ENCODE measurements at regions of chr15 and their contacts with region 1.

Region 1: GRCh38 chr15:83559310-83559966 is 94.5 kb upstream of the ADAMTSL3 start:
- DNase-seq: peak; percentile 57 to 75
- H3K4me3 ChIP-seq: no peak overlapping the region
- H3K4me3 Mint-ChIP-seq: no peak overlapping the region
- H3K27ac Mint-ChIP-seq: no peak overlapping the region
- H3K4me1 ChIP-seq: no peaks in the 10 kb centered on the region
- H3K4me1 Mint-ChIP-seq: no peaks in the 10 kb centered on the region
- H3K27me3 ChIP-seq: no peaks in the 10 kb centered on the region
- H3K27me3 Mint-ChIP-seq: peaks cover 3% of the 10 kb centered on the region
- CTCF ChIP-seq: peak; percentile 75 to 78

Region 2: DNA sequence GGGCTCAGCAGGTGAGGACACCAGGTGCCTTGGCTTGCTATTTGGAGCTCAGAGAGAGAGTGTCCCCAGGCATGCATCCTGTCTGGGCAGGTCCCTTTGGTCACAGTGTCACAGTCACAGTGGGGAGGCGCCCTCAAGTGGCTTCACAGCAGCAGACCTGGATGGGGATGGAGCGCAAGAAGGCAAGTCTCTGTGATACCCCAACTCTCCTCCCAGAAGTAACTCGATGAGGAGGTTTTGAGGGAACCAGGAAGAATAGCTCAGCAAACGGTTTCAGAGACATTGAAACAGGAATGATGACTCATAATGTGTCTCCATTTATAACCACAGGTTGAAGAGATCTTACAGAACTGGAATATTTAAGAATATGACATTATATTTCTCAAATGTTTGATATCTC is 178.8 kb before region 1 on chr15:
- CTCF ChIA-PET with region 1: no interaction called
- POLR2A ChIA-PET with region 1: interaction called, 5 read pairs
- intact Hi-C with region 1: loop called (anchors 5 kb)
- DNase-seq: peak; percentile 78
- H3K4me3 ChIP-seq: no peak overlapping the region
- H3K4me3 Mint-ChIP-seq: no peak overlapping the region
- H3K27ac Mint-ChIP-seq: no peak overlapping the region
- H3K4me1 ChIP-seq: no peaks in the 10 kb centered on the region
- H3K4me1 Mint-ChIP-seq: peaks cover 5% of the 10 kb centered on the region
- H3K27me3 ChIP-seq: no peaks in the 10 kb centered on the region
- H3K27me3 Mint-ChIP-seq: peaks cover 4% of the 10 kb centered on the region
- CTCF ChIP-seq: peak; percentile 57 to 82

Region 3: GRCh38 chr15:83498801-83499200 is 60.6 kb before region 1 on chr15:
- CTCF ChIA-PET with region 1: no interaction called
- POLR2A ChIA-PET with region 1: no interaction called
- intact Hi-C with region 1: loop called (anchors 10 kb)
- DNase-seq: no peak
- H3K4me3 ChIP-seq: no peak overlapping the region
- H3K4me3 Mint-ChIP-seq: no peak overlapping the region
- H3K27ac Mint-ChIP-seq: peak overlapping the region; percentile 25
- H3K4me1 ChIP-seq: 0 out of 2 replicates have a peak, but pooled peaks cover 11% of the 10 kb centered on the region
- H3K4me1 Mint-ChIP-seq: peaks cover 23% of the 10 kb centered on the region
- H3K27me3 ChIP-seq: no peaks in the 10 kb centered on the region
- H3K27me3 Mint-ChIP-seq: no peaks in the 10 kb centered on the region
- CTCF ChIP-seq: no peak

Measured in Caco-2 (cell line).